Heart right ventricle (tissue), 16 donors: ENCODE measurements at regions of chr17 and their contacts with region 1.

Region 1: GRCh38 chr17:56779898-56780733 is 53.6 kb downstream of the C17orf67 start:
- DNase-seq: peak; percentile 62 to 77
- ATAC-seq: peak; percentile 95 to 97 (median 96)
- H3K4me3 ChIP-seq: peak overlapping the region in 9 of 10 donors; percentile 10 to 44 (median 39)
- H3K27ac ChIP-seq: no peak overlapping the region
- H3K4me1 ChIP-seq: peaks cover 0 to 12% (median 10%) of the 10 kb centered on the region in 9 donors
- H3K27me3 ChIP-seq: peaks cover 0 to 51% (median 36%) of the 10 kb centered on the region in 7 donors
- CTCF ChIP-seq: peak; percentile 97 to 100 (median 99)

Region 2: GRCh38 chr17:56592487-56593085 is 187.5 kb before region 1 on chr17:
- intact Hi-C with region 1: loop called (anchors 2 to 10 kb)
- DNase-seq: peak; percentile 46 to 67
- ATAC-seq: peak; percentile 82 to 87 (median 84)
- H3K4me3 ChIP-seq: peak overlapping the region; percentile 30 to 78 (median 59)
- H3K27ac ChIP-seq: no peak overlapping the region
- H3K4me1 ChIP-seq: peaks cover 13 to 48% (median 32%) of the 10 kb centered on the region in 9 donors
- H3K27me3 ChIP-seq: peaks cover 0 to 89% (median 65%) of the 10 kb centered on the region in 7 donors
- CTCF ChIP-seq: peak; percentile 82 to 99 (median 96)

Region 3: DNA sequence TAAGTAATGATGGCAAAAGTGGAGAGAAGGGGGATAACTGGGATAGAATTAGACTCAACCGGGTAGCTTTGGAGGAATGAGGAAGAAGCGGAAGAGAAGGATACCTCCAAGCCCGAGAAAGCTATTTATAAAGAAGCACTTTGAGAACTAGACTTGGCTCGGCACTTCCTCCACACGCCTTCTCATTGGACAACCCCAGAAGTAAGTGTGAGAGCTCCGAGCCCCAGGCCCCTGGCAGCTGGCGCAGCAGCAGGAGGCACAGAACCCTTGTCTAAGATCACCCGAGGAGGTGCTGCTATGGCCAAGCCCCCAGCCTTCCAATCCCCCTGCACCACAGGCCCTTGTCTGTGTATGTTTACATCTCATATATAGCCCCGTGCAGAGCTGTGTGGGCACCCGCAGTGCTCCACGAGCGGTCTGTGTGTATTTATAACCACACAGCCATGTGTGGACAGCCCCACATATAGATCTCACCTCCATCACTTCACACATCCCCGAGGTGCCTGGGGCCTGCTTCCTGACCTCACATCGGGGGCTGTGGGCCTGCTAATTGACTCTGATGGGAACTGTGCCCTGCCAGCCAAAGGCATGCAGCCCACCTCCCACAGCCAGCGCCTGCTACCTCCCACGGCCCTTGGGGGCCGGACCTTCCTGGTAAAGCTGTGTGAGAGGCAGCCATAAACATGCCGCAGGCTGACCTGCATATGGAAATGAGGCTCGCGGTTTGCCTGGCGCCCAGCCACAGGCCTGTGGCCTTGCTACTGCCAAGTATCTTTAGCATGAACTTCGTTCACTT is 42.6 kb before region 1 on chr17:
- intact Hi-C with region 1: no loop called
- DNase-seq: no peak
- ATAC-seq: peak in 1 of 8 donors; percentile 47
- H3K4me3 ChIP-seq: no peak overlapping the region
- H3K27ac ChIP-seq: no peak overlapping the region
- H3K4me1 ChIP-seq: no peaks in the 10 kb centered on the region
- H3K27me3 ChIP-seq: peaks cover 0 to 18% (median 0%) of the 10 kb centered on the region in 7 donors
- CTCF ChIP-seq: no peak